ENCODE measurements at regions of chr10 and their contacts with region 1.

Region 1: DNA sequence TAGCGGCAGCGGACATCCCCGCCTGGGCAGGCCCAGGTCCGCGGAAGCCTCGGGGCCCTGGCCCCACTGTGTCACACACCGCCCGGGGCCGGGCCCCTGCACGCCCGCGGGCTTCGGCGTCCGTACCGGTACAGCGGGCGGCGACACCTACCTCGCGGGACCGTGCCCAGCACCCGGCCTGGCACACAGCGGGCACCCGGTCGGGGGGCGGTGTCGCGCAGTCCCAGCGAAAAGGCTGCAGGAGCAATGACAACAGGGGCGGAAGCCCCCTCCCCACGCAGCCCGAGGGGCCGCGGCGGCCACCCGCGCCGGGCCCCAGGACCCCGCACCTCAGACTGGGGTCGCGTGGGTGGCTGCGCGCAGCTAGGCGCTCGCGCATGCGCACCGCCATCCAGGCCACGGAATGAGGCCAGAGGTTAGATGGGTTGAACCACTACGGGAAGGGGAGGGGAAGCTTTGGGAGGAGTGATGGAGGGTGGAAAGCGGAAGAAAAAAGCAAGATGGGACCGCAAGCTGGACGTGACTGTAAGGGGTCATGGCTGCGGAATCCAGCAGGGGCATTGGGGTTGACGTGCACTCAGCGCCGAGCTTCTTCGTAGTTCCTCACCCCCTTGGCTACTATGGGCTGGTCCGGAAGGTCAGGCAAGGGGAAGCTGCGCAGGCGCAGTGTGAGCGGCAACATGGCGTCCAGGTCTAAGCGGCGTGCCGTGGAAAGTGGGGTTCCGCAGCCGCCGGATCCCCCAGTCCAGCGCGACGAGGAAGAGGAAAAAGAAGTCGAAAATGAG is at the starts of genes BCCIP and UROS:
- DNase-seq: peak; percentile 90 to 97 (median 95)
- H3K4me3 ChIP-seq: peak within 1 kb of the TSS; percentile 67 to 96
- H3K4me3 Mint-ChIP-seq: peak within 1 kb of the TSS; percentile 75 to 90 (median 85)
- H3K27ac ChIP-seq: peak within 1 kb of the TSS; percentile 88
- H3K27ac Mint-ChIP-seq: peak within 1 kb of the TSS in 5 of 7 donors; percentile 70 to 94 (median 85)
- H3K4me1 ChIP-seq: peaks cover 37% of the 10 kb centered on the region
- H3K4me1 Mint-ChIP-seq: peaks cover 19 to 32% (median 24%) of the 10 kb centered on the region in 4 donors
- H3K27me3 ChIP-seq: no peaks in the 10 kb centered on the region
- H3K27me3 Mint-ChIP-seq: no peaks in the 10 kb centered on the region
- total RNA-seq, gene BCCIP: 35.4 to 40.7 TPM
- total RNA-seq, gene UROS: 38.8 to 41.3 TPM

Region 2: DNA sequence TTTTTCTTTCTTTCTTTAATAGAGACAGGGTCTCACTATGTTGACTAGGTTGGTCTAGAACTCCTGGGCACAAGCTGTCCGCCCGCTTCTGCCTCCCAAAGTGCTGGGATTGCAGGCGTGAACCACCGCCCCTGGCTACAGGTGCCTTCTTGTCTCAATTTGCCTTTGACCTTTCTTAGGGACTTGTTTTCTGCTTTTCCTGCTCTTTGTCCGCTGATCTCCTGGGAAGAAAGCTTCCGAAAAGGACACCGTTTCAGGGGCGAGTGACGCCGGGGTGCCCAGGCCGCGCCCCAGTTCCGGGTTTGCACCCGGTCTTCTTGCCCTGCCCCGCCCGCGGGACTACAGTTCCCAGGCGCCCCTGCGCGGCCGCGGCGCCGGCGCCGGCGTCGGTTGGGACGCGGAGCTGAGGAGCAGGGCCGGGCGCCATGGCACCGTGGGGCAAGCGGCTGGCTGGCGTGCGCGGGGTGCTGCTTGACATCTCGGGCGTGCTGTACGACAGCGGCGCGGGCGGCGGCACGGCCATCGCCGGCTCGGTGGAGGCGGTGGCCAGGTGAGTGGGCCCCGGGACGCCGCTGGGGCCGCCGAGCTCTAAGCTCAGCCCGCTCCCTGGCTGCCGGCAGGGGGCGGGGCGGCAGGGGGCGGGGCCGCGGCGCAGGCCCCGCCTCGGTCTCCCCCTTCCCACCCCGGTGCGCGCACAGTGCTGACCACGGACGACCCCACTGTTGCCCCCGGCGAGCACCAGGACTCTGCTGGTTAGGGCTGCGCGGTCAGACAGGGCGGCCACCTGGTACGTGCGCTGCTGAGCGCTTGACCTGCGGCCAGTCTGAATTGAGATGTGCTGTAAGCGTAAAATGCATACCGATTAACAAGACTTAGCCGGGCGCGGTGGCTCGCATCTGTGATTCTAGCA is 1361.4 kb before region 1 on chr10 and contains the start of gene LHPP:
- CTCF ChIA-PET with region 1: no interaction called
- POLR2A ChIA-PET with region 1: no interaction called
- intact Hi-C with region 1: loop called (anchors 5 kb)
- DNase-seq: peak; percentile 85 to 90 (median 86)
- H3K4me3 ChIP-seq: peak within 1 kb of the TSS; percentile 42 to 76
- H3K4me3 Mint-ChIP-seq: peak within 1 kb of the TSS; percentile 88 to 96 (median 92)
- H3K27ac ChIP-seq: peak within 1 kb of the TSS; percentile 59
- H3K27ac Mint-ChIP-seq: peak within 1 kb of the TSS; percentile 80 to 98 (median 97)
- H3K4me1 ChIP-seq: peaks cover 27% of the 10 kb centered on the region
- H3K4me1 Mint-ChIP-seq: peaks cover 21 to 36% (median 29%) of the 10 kb centered on the region in 4 donors
- H3K27me3 ChIP-seq: no peaks in the 10 kb centered on the region
- H3K27me3 Mint-ChIP-seq: peaks cover 4 to 5% of the 10 kb centered on the region in 2 donors
- total RNA-seq, gene LHPP: 17.9 to 18.3 TPM

Region 3: DNA sequence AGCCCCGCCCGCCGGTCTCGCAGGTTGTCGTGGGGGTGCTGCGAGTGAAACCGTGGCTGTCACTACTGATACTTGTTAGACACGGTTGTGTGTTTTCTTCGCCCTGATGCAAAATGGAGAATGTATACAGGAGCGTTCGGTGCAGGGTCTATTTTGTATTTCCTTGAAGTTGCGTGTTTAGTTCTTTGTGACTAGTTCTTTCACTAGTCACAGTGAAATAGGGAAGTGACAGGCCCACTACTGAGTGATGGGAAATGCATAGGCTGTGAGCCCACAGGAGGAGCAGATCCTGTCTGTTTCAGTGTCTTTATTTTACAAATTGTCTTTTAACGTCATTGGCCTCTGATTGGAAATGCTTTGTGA is 1020.8 kb before region 1 on chr10:
- CTCF ChIA-PET with region 1: no interaction called
- POLR2A ChIA-PET with region 1: no interaction called
- intact Hi-C with region 1: loop called (anchors 5 kb)
- DNase-seq: peak in 2 of 5 donors; percentile 7 to 46
- H3K4me3 ChIP-seq: peak overlapping the region; percentile 76 to 78
- H3K4me3 Mint-ChIP-seq: peak overlapping the region; percentile 87 to 98 (median 90)
- H3K27ac ChIP-seq: peak overlapping the region; percentile 83
- H3K27ac Mint-ChIP-seq: peak overlapping the region; percentile 76 to 94 (median 90)
- H3K4me1 ChIP-seq: peaks cover 14% of the 10 kb centered on the region
- H3K4me1 Mint-ChIP-seq: peaks cover 12 to 20% (median 17%) of the 10 kb centered on the region in 4 donors
- H3K27me3 ChIP-seq: no peaks in the 10 kb centered on the region
- H3K27me3 Mint-ChIP-seq: peaks cover 3% of the 10 kb centered on the region in 2 donors

Region 4: DNA sequence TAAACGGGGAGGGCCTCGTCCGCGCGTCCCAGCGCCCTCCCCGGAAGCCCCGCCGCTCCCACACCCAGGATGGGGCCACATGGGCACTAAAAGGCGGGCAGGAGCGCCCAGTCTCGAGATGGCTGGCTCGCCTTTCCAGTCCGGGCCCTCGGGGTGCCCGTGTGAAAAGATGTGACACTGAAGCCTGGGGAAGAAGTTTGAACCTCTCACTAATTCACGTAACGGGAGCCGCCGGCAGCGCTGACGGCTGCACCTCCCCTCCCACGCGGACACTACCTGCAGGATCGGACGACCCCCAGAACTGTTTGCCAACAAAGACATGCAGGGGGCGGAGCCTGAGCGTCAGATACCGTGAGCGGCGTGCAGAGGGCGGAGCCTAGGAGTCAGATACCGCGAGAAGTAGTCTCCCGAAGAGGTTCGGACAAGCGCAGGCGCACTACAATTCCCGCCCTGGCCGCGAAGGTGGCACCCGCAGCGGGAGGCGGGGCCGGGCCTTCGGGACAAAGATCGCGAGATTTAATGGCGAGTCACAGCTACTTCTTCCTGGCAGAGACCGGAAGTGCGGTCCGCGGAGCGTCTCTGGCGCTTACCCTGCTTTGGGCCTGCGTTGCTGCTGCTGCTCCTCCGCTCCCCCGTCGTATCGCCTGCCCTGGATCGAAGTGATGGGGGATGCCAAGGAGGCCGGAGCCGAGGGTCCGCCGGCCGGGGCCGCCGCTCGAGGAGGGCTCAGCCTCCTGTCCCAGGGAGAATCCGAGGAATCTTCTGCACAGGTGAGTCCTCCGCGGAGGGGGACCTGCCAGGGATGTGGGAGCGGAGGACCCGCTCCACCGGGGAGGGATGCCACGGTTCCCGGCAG is 103.7 kb before region 1 on chr10 and contains the start of gene EDRF1:
- CTCF ChIA-PET with region 1: no interaction called
- POLR2A ChIA-PET with region 1: interaction called, 19 read pairs
- intact Hi-C with region 1: loop called (anchors 1 kb)
- DNase-seq: peak; percentile 99 to 100 (median 99)
- H3K4me3 ChIP-seq: peak within 1 kb of the TSS; percentile 86 to 94
- H3K4me3 Mint-ChIP-seq: peak within 1 kb of the TSS; percentile 94 to 100 (median 99)
- H3K27ac ChIP-seq: peak within 1 kb of the TSS; percentile 90
- H3K27ac Mint-ChIP-seq: peak within 1 kb of the TSS; percentile 95 to 99 (median 98)
- H3K4me1 ChIP-seq: peaks cover 26% of the 10 kb centered on the region
- H3K4me1 Mint-ChIP-seq: peaks cover 14 to 44% (median 28%) of the 10 kb centered on the region in 4 donors
- H3K27me3 ChIP-seq: no peaks in the 10 kb centered on the region
- H3K27me3 Mint-ChIP-seq: no peaks in the 10 kb centered on the region
- total RNA-seq, gene EDRF1: 56.3 to 57.8 TPM

Region 5: DNA sequence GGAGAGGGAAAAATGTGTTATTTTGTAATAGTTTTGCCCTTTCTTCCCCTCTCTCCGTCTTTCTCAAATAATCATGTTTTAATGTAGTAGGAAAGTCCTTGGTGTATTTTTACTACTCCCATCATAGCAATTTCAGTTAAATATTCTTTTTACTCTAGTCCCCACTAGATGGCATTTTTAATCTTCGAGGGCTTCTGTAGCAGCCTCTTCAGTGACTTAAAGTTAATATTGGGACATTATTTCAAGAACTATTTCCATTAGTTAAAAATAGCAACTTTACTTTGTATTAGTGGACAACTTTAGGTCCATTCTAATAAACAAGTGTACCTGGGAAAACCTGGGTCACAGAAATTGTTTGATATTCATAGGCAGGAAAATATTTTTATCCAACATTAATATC is 80.6 kb before region 1 on chr10:
- CTCF ChIA-PET with region 1: no interaction called
- POLR2A ChIA-PET with region 1: no interaction called
- intact Hi-C with region 1: no loop called
- DNase-seq: no peak
- H3K4me3 ChIP-seq: no peak overlapping the region
- H3K4me3 Mint-ChIP-seq: no peak overlapping the region
- H3K27ac ChIP-seq: no peak overlapping the region
- H3K27ac Mint-ChIP-seq: no peak overlapping the region
- H3K4me1 ChIP-seq: no peaks in the 10 kb centered on the region
- H3K4me1 Mint-ChIP-seq: peaks cover 0 to 7% (median 0%) of the 10 kb centered on the region in 4 donors
- H3K27me3 ChIP-seq: no peaks in the 10 kb centered on the region
- H3K27me3 Mint-ChIP-seq: no peaks in the 10 kb centered on the region